Activated T-helper 2 cell treated with anti-CD3 and anti-CD28 coated beads, Interferon-gamma antibody, Interleukin-2, Interleukin-4, amounts not matched to agents 10 μg/mL and 5 μg/mL and 100 μg/mL, durations not matched to agents 14 hours and 24 hours and 36 hours (primary cell): ENCODE measurements at regions of chr22 and their contacts with region 1.

Region 1: GRCh38 chr22:44180706-44181032 is at the start of gene PARVG:
- DNase-seq: peak; percentile 30
- H3K4me3 Mint-ChIP-seq: peak within 1 kb of the TSS; percentile 83
- H3K27ac Mint-ChIP-seq: peak within 1 kb of the TSS; percentile 92
- H3K4me1 Mint-ChIP-seq: peaks cover 21% of the 10 kb centered on the region
- H3K27me3 Mint-ChIP-seq: peaks cover 9% of the 10 kb centered on the region
- total RNA-seq, gene PARVG: 73.5 and 75.6 TPM in 2 replicates

Region 2: GRCh38 chr22:44026630-44027511 is 153.8 kb before region 1 on chr22:
- intact Hi-C with region 1: loop called (anchors 10 kb)
- DNase-seq: peak; percentile 70
- H3K4me3 Mint-ChIP-seq: peak overlapping the region; percentile 89
- H3K27ac Mint-ChIP-seq: peak overlapping the region; percentile 98
- H3K4me1 Mint-ChIP-seq: peaks cover 51% of the 10 kb centered on the region
- H3K27me3 Mint-ChIP-seq: no peaks in the 10 kb centered on the region

Region 3: DNA sequence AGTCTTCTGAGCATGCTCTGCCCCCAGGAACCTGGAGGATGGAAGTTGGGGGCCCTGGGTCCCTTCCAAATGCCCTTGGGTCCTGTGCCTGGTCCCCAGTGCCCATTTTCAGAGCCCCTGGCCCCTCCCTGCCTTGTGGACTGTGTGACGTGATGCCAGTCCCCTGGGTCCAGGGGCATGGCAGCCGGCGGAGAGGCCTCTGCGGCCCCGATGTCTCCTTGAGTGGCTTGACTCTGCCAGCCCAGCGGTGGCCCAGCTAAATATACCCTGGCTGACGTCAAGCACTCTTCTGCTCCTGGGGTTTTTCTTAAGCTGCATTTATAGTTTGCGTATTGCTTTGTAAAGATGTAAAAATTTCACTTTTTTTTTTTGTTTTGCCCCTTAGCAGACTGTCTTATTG is 35.1 kb before region 1 on chr22:
- intact Hi-C with region 1: no loop called
- DNase-seq: no peak
- H3K4me3 Mint-ChIP-seq: no peak overlapping the region
- H3K27ac Mint-ChIP-seq: no peak overlapping the region
- H3K4me1 Mint-ChIP-seq: no peaks in the 10 kb centered on the region
- H3K27me3 Mint-ChIP-seq: no peaks in the 10 kb centered on the region

Region 4: GRCh38 chr22:44191036-44191454 is 10.4 kb after region 1 on chr22:
- intact Hi-C with region 1: loop called (anchors 1 kb)
- DNase-seq: no peak
- H3K4me3 Mint-ChIP-seq: no peak overlapping the region
- H3K27ac Mint-ChIP-seq: peak overlapping the region; percentile 55
- H3K4me1 Mint-ChIP-seq: peaks cover 29% of the 10 kb centered on the region
- H3K27me3 Mint-ChIP-seq: no peaks in the 10 kb centered on the region

Region 5: GRCh38 chr22:44224166-44224565 is 43.5 kb after region 1 on chr22:
- intact Hi-C with region 1: no loop called
- DNase-seq: no peak
- H3K4me3 Mint-ChIP-seq: no peak overlapping the region
- H3K27ac Mint-ChIP-seq: no peak overlapping the region
- H3K4me1 Mint-ChIP-seq: no peaks in the 10 kb centered on the region
- H3K27me3 Mint-ChIP-seq: peaks cover 9% of the 10 kb centered on the region